ENCODE measurements at regions of chr1 and their contacts with region 1.

Region 1: GRCh38 chr1:2786329-2787162 is 14.9 kb downstream of the TTC34 start:
- DNase-seq: peak; percentile 80
- H3K4me3 ChIP-seq: no peak overlapping the region; a peak in 1 of 4 replicates
- H3K27ac ChIP-seq: no peak overlapping the region
- H3K4me1 ChIP-seq: no peaks in the 10 kb centered on the region
- H3K27me3 ChIP-seq: no peaks in the 10 kb centered on the region
- CTCF ChIP-seq: peak; percentile 46
- EP300 ChIP-seq: no peak
- RAD21 ChIP-seq: peak; percentile 58

Region 2: DNA sequence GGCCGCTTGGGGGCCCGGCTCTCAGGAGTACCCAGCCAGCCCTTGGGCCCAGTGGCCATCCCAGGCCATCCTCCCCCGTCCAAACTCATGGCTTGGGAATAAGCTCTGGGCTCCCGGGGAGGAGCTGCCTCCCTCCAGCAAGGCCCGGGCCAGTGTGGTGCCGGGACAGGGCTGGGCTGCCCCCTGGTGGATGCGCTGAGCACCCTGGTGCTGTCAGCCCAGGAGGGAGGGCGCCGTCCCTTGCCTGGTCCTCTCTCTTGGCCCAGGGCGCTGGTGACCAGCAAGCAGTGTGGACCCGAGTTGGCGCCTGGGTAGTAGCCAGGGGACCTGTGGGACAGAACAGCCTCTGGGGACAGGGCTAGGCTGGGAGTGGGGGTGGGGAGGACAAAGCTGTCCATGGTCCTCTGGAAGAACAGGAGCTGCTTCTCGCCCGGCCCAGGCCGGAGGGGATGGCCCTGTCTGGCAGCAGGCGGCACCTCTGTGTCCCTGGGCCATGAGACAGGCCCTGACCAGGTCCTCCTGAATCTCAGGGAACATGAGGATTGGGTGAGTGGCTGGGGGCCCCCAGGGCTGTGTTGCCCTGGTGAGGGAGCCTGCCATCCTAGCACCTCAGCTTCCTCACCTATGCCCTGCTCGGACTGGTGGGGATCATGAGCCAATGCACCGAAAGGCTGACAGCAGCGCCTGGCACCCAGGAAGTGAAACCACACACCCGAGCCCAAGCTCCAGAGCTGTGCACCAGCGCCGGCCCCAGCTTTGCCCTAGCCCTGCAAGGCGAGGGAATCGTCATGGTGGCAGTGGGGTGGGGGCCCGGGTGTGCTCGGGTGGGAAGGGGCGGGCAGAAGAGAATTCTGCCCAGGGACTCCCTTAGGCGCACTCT is 404.6 kb before region 1 on chr1:
- CTCF ChIA-PET with region 1: no interaction called
- POLR2A ChIA-PET with region 1: no interaction called
- DNase-seq: peak; percentile 98
- H3K4me3 ChIP-seq: no peak overlapping the region; a peak in 1 of 4 replicates
- H3K27ac ChIP-seq: peak overlapping the region in 1 of 2 experiments; percentile 28; a peak in 1 of 4 replicates
- H3K4me1 ChIP-seq: peaks cover 0 to 6% of the 10 kb centered on the region in 2 experiments; a peak in 1 of 4 replicates
- H3K27me3 ChIP-seq: no peaks in the 10 kb centered on the region
- CTCF ChIP-seq: peak; percentile 76
- EP300 ChIP-seq: no peak
- RAD21 ChIP-seq: peak; percentile 87

Region 3: GRCh38 chr1:2419416-2419815 is 367.1 kb before region 1 on chr1:
- CTCF ChIA-PET with region 1: interaction called, 12 read pairs
- POLR2A ChIA-PET with region 1: no interaction called
- DNase-seq: no peak
- H3K4me3 ChIP-seq: no peak overlapping the region
- H3K27ac ChIP-seq: no peak overlapping the region
- H3K4me1 ChIP-seq: peaks cover 0 to 15% of the 10 kb centered on the region in 2 experiments; a peak in 1 of 4 replicates
- H3K27me3 ChIP-seq: peaks cover 35% of the 10 kb centered on the region
- CTCF ChIP-seq: no peak
- EP300 ChIP-seq: no peak
- RAD21 ChIP-seq: no peak

Region 4: DNA sequence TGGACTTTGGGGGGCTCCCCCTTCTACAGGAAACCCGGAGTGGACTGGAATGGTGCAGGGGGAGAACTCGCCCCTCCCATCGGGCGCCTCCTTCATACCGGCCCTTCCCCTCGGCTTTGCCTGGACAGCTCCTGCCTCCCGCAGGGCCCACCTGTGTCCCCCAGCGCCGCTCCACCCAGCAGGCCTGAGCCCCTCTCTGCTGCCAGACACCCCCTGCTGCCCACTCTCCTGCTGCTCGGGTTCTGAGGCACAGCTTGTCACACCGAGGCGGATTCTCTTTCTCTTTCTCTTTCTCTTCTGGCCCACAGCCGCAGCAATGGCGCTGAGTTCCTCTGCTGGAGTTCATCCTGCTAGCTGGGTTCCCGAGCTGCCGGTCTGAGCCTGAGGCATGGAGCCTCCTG is 230.3 kb before region 1 on chr1 and contains the start of gene TNFRSF14:
- CTCF ChIA-PET with region 1: interaction called, 16 read pairs
- POLR2A ChIA-PET with region 1: no interaction called
- DNase-seq: no peak
- H3K4me3 ChIP-seq: no peak within 1 kb of the TSS
- H3K27ac ChIP-seq: no peak within 1 kb of the TSS
- H3K4me1 ChIP-seq: peaks cover 0 to 4% of the 10 kb centered on the region in 2 experiments; a peak in 1 of 4 replicates
- H3K27me3 ChIP-seq: no peaks in the 10 kb centered on the region
- CTCF ChIP-seq: no peak
- EP300 ChIP-seq: no peak
- RAD21 ChIP-seq: no peak
- polyA plus RNA-seq, gene TNFRSF14: 0.19 and 0.28 TPM in 2 replicates

Region 5: DNA sequence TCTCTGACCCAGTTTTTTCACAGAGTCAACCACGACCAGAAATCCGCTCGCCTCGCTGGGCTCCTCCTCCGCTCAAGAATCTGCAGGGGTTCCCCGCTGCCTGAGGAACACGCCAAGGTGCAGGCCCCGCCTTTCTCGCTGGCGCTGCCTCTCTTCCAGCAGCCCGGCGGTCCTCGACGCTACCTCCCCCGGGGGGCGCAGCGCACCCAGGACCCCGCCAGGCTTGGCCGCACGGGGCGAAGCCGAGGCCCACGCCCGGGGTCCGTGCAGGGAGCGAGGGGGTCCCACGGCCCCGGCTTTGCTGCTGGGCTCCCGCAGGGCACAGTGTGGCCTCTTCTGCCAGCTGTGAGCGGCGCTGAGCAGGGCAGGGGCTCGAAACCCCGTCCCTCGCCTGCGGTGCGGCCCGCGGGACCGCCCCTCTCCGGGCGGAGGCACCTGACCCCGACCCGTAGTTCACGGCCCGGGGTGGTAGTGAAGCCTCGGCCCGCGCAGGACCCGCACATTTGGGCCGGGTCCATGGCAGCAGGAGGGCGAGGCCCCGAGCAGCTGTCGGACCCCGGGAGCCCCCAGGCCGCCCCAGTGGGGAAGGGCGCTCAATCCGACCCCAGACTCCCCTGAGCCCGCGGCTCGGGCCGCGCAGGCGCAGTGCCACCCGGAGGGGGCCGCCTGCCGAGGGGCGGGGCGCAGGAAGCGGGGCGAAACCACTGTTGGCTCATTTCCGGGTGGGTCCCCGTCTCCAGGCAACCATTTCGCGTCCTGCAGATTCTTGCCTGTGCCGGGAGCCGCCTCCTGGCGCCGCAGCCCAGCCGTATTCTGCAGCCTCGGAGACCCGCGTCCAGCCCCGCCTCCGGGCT is 143.8 kb before region 1 on chr1:
- CTCF ChIA-PET with region 1: no interaction called
- POLR2A ChIA-PET with region 1: no interaction called
- DNase-seq: peak; percentile 100
- H3K4me3 ChIP-seq: peak overlapping the region; percentile 73 to 96
- H3K27ac ChIP-seq: peak overlapping the region; percentile 24 to 65; a peak in 2 of 4 replicates
- H3K4me1 ChIP-seq: peaks cover 0 to 22% of the 10 kb centered on the region in 2 experiments; a peak in 1 of 4 replicates
- H3K27me3 ChIP-seq: no peaks in the 10 kb centered on the region
- CTCF ChIP-seq: no peak
- EP300 ChIP-seq: peak in 1 of 2 experiments; percentile 4; a peak in 1 of 4 replicates
- RAD21 ChIP-seq: peak; percentile 41; the same call in 1 of the 2 replicates

Region 6: GRCh38 chr1:2796890-2797740 is 10.6 kb after region 1 on chr1:
- CTCF ChIA-PET with region 1: interaction called, 10 read pairs
- POLR2A ChIA-PET with region 1: no interaction called
- DNase-seq: no peak
- H3K4me3 ChIP-seq: no peak overlapping the region
- H3K27ac ChIP-seq: no peak overlapping the region
- H3K4me1 ChIP-seq: no peaks in the 10 kb centered on the region
- H3K27me3 ChIP-seq: no peaks in the 10 kb centered on the region
- CTCF ChIP-seq: no peak
- EP300 ChIP-seq: no peak
- RAD21 ChIP-seq: no peak